A673 (cell line): ENCODE measurements at regions of chr10 and their contacts with region 1.

Region 1: DNA sequence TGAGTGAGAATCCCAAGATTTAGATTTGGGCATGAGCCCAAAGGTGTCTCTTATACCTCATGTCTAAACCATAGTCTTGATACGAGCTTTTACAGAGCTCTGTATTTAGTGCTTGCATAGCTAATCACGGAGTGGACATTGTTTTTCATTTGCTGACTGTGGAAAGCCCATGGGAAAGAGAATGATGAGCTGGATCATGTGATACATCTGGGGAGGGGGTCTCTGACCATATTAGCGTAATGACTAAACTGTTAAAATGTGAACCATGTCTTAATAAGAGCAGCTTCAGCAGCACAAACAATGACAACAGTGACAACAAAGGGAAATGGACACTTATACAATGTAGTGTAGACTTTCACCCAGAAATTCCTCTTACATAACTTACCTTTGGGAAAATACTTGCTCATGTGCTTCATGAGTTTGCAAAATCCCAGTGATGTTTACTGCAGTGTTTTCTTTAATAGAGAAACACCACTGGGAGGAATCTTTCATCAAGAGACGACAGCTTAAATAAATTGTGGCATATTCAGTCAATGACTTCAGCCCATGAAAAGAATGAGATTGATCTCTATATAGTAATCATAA is 44.0 kb upstream of the ITGB1 start:
- DNase-seq: no peak
- H3K4me3 ChIP-seq: no peak overlapping the region
- H3K27ac ChIP-seq: no peak overlapping the region
- H3K4me1 ChIP-seq: peaks cover 8% of the 10 kb centered on the region
- H3K27me3 ChIP-seq: no peaks in the 10 kb centered on the region
- CTCF ChIP-seq: no peak

Region 2: DNA sequence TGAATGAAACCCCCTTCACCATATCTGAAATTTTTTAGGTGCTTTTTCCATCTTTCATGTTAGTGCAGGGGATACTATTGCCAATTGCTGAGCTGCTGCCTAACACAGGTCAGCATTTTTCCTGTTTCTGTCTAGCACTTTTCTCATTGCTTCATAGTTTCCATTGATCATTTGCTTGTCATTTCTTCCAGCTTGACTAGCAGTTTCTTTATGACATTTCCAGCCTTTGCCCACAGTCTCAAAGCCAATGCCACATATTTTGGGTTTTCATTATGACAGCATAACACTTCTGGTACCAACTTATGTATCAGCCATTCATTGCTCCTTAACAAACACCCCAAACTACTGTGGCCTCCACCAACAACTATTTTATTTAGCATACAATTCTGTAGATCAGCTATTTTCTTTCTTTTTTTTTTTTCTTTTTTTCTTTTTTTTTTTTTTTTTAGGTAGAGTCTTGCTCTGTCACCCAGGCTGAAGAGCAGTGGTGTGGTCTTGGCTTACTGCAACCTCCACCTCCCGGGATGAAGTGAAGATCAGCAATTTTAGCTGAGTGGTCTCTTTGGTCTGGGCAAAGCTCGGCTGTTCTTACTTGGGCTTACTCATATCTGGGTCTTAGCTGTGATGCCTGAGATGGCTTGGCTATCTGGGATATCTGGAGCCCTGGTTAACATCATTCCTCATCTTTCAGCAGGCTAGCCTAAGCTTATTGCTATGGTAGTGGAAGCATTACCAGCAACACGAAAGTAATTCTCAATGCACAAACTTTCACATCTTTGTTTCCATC is 757.4 kb before region 1 on chr10:
- CTCF ChIA-PET with region 1: no interaction called
- POLR2A ChIA-PET with region 1: no interaction called
- intact Hi-C with region 1: no loop called
- DNase-seq: no peak
- H3K4me3 ChIP-seq: no peak overlapping the region
- H3K27ac ChIP-seq: no peak overlapping the region
- H3K4me1 ChIP-seq: no peaks in the 10 kb centered on the region
- H3K27me3 ChIP-seq: no peaks in the 10 kb centered on the region
- CTCF ChIP-seq: no peak

Region 3: DNA sequence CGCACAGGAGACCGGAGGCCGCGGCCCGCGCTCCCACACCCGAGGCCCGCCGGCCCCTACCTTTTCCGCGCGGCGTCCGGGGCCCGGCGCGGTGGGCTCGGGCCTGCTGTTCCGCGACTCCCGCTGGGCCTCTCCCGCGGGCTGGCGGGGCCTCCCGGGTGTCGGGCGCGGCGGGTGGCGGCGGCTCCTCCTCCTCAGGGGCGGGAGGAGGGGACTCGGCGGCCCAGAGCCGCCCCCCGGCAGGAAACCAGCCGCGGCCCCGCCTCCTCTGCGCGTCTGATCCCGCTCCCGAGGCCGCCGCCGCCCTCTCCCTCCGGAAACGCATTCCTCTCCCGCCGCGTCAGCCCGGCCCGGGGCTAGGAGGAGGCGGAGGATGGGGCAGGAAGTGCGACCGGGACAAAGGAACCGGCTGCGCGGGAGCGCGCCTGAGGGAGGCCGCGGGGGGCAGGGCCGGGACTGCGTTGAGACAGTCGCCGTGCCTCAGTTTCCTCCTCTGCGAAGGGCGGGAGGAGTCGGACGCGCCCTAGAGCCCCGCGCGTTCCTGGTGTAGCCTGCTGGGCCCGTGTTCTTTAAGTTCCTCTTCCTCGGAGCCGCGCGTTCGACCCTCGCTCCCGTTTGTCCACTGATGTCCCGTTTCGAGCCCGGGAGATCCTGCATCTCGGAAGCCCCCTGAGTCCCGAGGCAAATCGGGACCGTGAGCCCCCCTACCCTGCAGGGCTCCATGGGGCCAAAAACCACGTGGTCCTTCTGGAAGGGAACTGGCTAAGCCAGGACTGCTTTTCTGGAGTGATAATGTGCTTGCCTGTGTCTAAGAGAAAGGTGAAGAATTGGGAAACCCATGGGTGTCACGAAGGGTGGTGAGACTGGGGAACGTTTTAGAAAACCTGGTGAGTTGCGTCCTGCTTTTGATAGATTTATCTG is 43.7 kb before region 1 on chr10 and contains the start of gene ITGB1:
- CTCF ChIA-PET with region 1: no interaction called
- POLR2A ChIA-PET with region 1: interaction called, 3 read pairs
- intact Hi-C with region 1: loop called (anchors 2 kb)
- DNase-seq: peak; percentile 98
- H3K4me3 ChIP-seq: peak within 1 kb of the TSS; percentile 93
- H3K27ac ChIP-seq: peak within 1 kb of the TSS; percentile 99
- H3K4me1 ChIP-seq: peaks cover 45% of the 10 kb centered on the region
- H3K27me3 ChIP-seq: no peaks in the 10 kb centered on the region
- CTCF ChIP-seq: no peak
- total RNA-seq, gene ITGB1: 276 and 282 TPM in 2 replicates

Region 4: GRCh38 chr10:33876584-33877400 is 874.8 kb after region 1 on chr10:
- CTCF ChIA-PET with region 1: no interaction called
- POLR2A ChIA-PET with region 1: no interaction called
- intact Hi-C with region 1: no loop called
- DNase-seq: no peak
- H3K4me3 ChIP-seq: no peak overlapping the region
- H3K27ac ChIP-seq: no peak overlapping the region
- H3K4me1 ChIP-seq: no peaks in the 10 kb centered on the region
- H3K27me3 ChIP-seq: no peaks in the 10 kb centered on the region
- CTCF ChIP-seq: no peak